ENCODE measurements at regions of chr11 and their contacts with region 1.

Region 1: DNA sequence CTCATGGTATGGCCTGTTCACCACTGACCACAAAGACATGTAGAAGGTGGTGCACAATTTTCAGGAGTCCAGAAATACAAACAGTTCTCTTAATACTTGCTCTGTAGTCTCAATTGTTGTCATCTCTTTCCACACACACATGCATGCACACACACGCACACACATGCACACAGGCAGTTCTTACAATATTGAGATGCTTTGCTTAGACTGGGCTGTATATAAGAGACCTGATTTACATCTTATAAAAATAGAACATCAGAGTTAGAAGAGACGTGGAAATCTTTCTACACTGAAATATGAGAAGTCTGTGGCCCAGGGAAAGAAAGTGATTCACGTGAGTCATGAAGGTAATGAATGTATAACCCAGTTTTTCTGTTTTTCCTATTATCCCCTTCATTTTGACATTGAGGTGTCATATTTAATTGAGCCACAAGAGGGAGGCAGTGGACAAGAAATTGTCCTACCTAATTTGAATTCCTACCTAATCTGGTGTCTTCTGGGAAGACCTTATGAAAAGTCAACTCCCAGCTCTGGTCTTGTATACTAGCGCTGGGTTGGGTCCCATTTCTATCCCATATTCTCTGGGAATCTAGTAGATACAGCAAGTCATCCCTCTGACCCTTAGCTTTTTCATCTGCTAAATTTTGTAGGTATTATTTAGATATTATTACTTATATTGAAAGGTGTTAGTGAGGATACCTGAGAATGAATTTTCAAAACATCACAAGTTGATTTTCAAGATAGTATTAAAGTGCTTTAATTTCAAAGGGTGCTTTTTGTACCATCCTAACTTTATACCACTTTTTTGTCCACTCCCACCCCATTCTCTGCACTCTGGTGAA is 14.9 kb upstream of the MS4A4A start:
- DNase-seq: peak; percentile 25
- ATAC-seq: no peak
- H3K4me3 Mint-ChIP-seq: no peak overlapping the region
- H3K27ac Mint-ChIP-seq: no peak overlapping the region
- H3K4me1 Mint-ChIP-seq: no peaks in the 10 kb centered on the region
- H3K27me3 Mint-ChIP-seq: peaks cover 14% of the 10 kb centered on the region
- CTCF ChIP-seq: peak; percentile 88

Region 2: GRCh38 chr11:60251485-60252212 is 13.9 kb before region 1 on chr11:
- CTCF ChIA-PET with region 1: interaction called, 10 read pairs
- POLR2A ChIA-PET with region 1: no interaction called
- intact Hi-C with region 1: no loop called
- DNase-seq: peak; percentile 32
- ATAC-seq: no peak
- H3K4me3 Mint-ChIP-seq: no peak overlapping the region
- H3K27ac Mint-ChIP-seq: no peak overlapping the region
- H3K4me1 Mint-ChIP-seq: no peaks in the 10 kb centered on the region
- H3K27me3 Mint-ChIP-seq: peaks cover 21% of the 10 kb centered on the region
- CTCF ChIP-seq: peak; percentile 58

Region 3: DNA sequence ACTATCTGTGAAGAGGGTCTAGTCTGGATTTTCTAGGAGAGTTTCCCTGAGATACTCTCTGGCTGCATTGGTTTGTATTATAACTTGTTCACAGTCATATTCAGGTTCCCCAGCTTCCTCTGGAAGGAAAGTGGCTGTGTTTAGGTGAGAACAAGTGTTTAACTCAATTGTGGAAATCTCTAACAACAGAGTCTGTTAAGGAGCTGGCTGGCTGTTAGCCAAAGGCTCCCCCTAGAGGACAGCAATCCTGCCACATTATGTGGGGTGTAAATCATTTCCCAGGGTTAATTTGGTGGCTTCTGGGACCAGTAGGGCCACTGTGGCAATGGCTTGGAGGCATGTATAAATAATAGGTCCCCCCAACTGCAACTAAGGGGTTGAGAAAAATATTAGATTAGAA is 79.9 kb after region 1 on chr11:
- CTCF ChIA-PET with region 1: interaction called, 48 read pairs
- POLR2A ChIA-PET with region 1: no interaction called
- intact Hi-C with region 1: loop called (anchors 2 kb)
- DNase-seq: peak; percentile 52
- ATAC-seq: no peak
- H3K4me3 Mint-ChIP-seq: no peak overlapping the region
- H3K27ac Mint-ChIP-seq: no peak overlapping the region
- H3K4me1 Mint-ChIP-seq: no peaks in the 10 kb centered on the region
- H3K27me3 Mint-ChIP-seq: peaks cover 17% of the 10 kb centered on the region
- CTCF ChIP-seq: peak; percentile 41

Region 4: GRCh38 chr11:60485986-60486385 is 220.4 kb after region 1 on chr11:
- CTCF ChIA-PET with region 1: interaction called, 3 read pairs
- POLR2A ChIA-PET with region 1: no interaction called
- intact Hi-C with region 1: loop called (anchors 10 kb)
- DNase-seq: peak; percentile 42
- ATAC-seq: peak; percentile 56
- H3K4me3 Mint-ChIP-seq: no peak overlapping the region
- H3K27ac Mint-ChIP-seq: no peak overlapping the region
- H3K4me1 Mint-ChIP-seq: no peaks in the 10 kb centered on the region
- H3K27me3 Mint-ChIP-seq: peaks cover 6% of the 10 kb centered on the region
- CTCF ChIP-seq: peak; percentile 20

Region 5: GRCh38 chr11:60615497-60615896 is 349.9 kb after region 1 on chr11:
- CTCF ChIA-PET with region 1: interaction called, 3 read pairs
- POLR2A ChIA-PET with region 1: no interaction called
- intact Hi-C with region 1: loop called (anchors 5 kb)
- DNase-seq: no peak
- ATAC-seq: no peak
- H3K4me3 Mint-ChIP-seq: no peak overlapping the region
- H3K27ac Mint-ChIP-seq: no peak overlapping the region
- H3K4me1 Mint-ChIP-seq: no peaks in the 10 kb centered on the region
- H3K27me3 Mint-ChIP-seq: peaks cover 10% of the 10 kb centered on the region
- CTCF ChIP-seq: no peak

Measured in activated CD8-positive, alpha-beta T cell treated with anti-CD3 and anti-CD28 coated beads for 36 hours (primary cell).